Activated naive CD4-positive, alpha-beta T cell treated with anti-CD3 and anti-CD28 coated beads for 36 hours (primary cell): ENCODE measurements at regions of chrX and their contacts with region 1.

Region 1: DNA sequence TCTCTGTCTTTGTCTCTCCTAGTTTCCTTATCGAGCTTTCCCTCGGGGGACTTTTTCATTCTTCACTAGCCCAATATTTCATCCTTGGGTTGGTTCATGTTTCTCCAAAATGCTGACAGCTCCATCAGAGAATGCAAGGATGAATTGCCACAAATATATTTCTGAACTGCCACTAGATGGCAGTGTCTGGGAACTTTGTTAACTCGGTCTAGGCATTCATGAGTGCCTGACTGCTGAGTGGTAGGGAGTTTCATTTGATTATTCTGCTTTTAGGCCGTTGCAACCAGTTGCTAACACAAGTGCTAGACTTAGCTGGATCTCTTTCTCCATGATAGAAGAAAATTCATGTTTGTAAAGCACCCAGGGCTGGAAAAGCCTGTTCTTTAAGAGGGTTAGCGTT is 73.5 kb upstream of the RAP2C start:
- DNase-seq: peak; percentile 33
- H3K4me3 Mint-ChIP-seq: no peak overlapping the region
- H3K27ac Mint-ChIP-seq: no peak overlapping the region
- H3K4me1 Mint-ChIP-seq: peaks cover 3% of the 10 kb centered on the region
- H3K27me3 Mint-ChIP-seq: no peaks in the 10 kb centered on the region

Region 2: DNA sequence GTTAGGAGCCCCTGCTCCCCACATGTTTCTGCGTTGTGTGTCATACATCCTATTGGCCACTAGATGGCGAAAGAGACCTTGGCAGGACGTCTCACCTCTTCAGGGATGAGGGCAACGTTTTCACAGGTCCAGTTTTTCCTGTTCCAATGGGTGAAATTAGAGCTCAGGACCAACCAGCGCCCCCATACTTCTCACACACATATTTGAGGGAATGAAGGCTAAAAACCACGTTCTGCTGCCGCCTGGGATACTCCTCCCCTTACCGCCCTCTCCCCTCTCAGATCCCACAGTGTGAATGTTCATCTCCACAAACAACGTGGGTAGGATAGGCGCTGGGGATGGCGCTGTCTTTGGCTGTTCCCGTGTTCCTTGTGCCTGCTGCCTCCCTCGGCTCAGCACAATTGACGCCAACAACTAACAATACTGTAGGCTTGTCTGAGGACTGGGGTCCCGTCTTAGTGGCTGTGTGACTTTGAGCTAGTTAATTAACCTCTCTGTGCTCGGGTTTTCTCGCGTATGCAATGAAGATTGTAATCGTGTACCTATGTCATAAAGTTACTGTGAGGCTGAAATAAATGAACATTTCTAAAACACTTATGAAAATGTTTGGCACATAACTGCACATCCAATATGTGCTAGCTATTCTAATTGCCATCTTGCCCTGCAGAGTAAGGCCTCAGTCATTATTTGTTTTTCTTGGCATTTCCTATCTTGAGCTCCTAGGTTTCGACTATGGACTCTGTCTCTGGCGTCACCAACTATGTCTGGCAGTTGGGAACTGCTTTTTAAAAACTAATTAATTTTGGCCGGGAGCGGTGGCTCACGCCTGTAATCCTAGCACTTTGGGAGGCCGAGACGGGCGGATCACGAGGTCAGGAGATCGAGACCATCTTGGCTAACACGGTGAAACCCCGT is 451.0 kb before region 1 on chrX:
- CTCF ChIA-PET with region 1: interaction called, 4 read pairs
- intact Hi-C with region 1: loop called (anchors 2 kb)
- DNase-seq: peak; percentile 25
- H3K4me3 Mint-ChIP-seq: no peak overlapping the region
- H3K27ac Mint-ChIP-seq: no peak overlapping the region
- H3K4me1 Mint-ChIP-seq: peaks cover 4% of the 10 kb centered on the region
- H3K27me3 Mint-ChIP-seq: no peaks in the 10 kb centered on the region

Region 3: GRCh38 chrX:132226169-132226568 is 66.6 kb before region 1 on chrX:
- CTCF ChIA-PET with region 1: interaction called, 5 read pairs
- intact Hi-C with region 1: loop called (anchors 1 kb)
- DNase-seq: no peak
- H3K4me3 Mint-ChIP-seq: no peak overlapping the region
- H3K27ac Mint-ChIP-seq: no peak overlapping the region
- H3K4me1 Mint-ChIP-seq: peaks cover 12% of the 10 kb centered on the region
- H3K27me3 Mint-ChIP-seq: no peaks in the 10 kb centered on the region

Region 4: DNA sequence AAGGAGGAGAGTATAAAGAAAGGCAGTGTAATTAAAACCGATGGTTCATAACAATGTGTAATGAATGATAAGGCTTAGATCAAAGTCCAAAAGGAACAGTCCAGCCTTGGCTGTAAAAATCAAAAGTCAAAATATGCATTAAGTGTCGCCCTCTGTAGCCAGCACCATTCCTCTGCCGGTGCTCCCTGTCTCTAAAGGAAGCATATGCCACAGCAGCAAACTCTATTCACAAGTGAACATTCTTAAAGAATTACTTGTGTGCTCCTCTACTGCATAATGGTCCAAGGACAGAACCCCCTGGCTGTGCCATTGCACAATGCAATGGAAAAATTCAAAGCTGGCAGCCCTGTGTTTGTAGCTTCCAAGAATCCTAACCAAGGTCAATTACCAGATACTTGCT is 212.3 kb after region 1 on chrX:
- CTCF ChIA-PET with region 1: interaction called, 5 read pairs
- intact Hi-C with region 1: loop called (anchors 5 kb)
- DNase-seq: no peak
- H3K4me3 Mint-ChIP-seq: no peak overlapping the region
- H3K27ac Mint-ChIP-seq: no peak overlapping the region
- H3K4me1 Mint-ChIP-seq: no peaks in the 10 kb centered on the region
- H3K27me3 Mint-ChIP-seq: no peaks in the 10 kb centered on the region

Region 5: GRCh38 chrX:132615391-132616131 is 322.8 kb after region 1 on chrX:
- CTCF ChIA-PET with region 1: interaction called, 45 read pairs
- intact Hi-C with region 1: loop called (anchors 1 kb)
- DNase-seq: peak; percentile 60
- H3K4me3 Mint-ChIP-seq: no peak overlapping the region
- H3K27ac Mint-ChIP-seq: no peak overlapping the region
- H3K4me1 Mint-ChIP-seq: no peaks in the 10 kb centered on the region
- H3K27me3 Mint-ChIP-seq: no peaks in the 10 kb centered on the region